GM12878 (cell line): ENCODE measurements at regions of chr10 and their contacts with region 1.

Region 1: GRCh38 chr10:68668231-68668630 is 52.8 kb upstream of the CCAR1 start:
- DNase-seq: no peak
- ATAC-seq: no peak
- H3K4me3 ChIP-seq: no peak overlapping the region
- H3K27ac ChIP-seq: no peak overlapping the region
- H3K4me1 ChIP-seq: no peaks in the 10 kb centered on the region
- H3K27me3 ChIP-seq: no peaks in the 10 kb centered on the region
- CTCF ChIP-seq: no peak
- EP300 ChIP-seq: no peak
- POLR2A ChIP-seq: no peak
- RAD21 ChIP-seq: no peak

Region 2: GRCh38 chr10:68618234-68618633 is 50.0 kb before region 1 on chr10:
- CTCF ChIA-PET with region 1: no interaction called
- POLR2A ChIA-PET with region 1: no interaction called
- RAD21 ChIA-PET with region 1: no interaction called
- SMC1A ChIA-PET with region 1: no interaction called
- in situ Hi-C with region 1: no loop called
- intact Hi-C with region 1: no loop called
- DNase-seq: no peak
- ATAC-seq: no peak
- H3K4me3 ChIP-seq: no peak overlapping the region
- H3K27ac ChIP-seq: no peak overlapping the region
- H3K4me1 ChIP-seq: no peaks in the 10 kb centered on the region; the same call in 1 of the 2 replicates
- H3K27me3 ChIP-seq: no peaks in the 10 kb centered on the region
- CTCF ChIP-seq: no peak
- EP300 ChIP-seq: no peak
- POLR2A ChIP-seq: no peak
- RAD21 ChIP-seq: no peak

Region 3: GRCh38 chr10:68697106-68697505 is 28.9 kb after region 1 on chr10:
- CTCF ChIA-PET with region 1: no interaction called
- POLR2A ChIA-PET with region 1: no interaction called
- RAD21 ChIA-PET with region 1: no interaction called
- SMC1A ChIA-PET with region 1: interaction called, 10 read pairs
- in situ Hi-C with region 1: no loop called
- intact Hi-C with region 1: no loop called
- DNase-seq: no peak
- ATAC-seq: no peak
- H3K4me3 ChIP-seq: no peak overlapping the region
- H3K27ac ChIP-seq: no peak overlapping the region
- H3K4me1 ChIP-seq: no peaks in the 10 kb centered on the region
- H3K27me3 ChIP-seq: no peaks in the 10 kb centered on the region
- CTCF ChIP-seq: no peak
- EP300 ChIP-seq: no peak
- POLR2A ChIP-seq: no peak
- RAD21 ChIP-seq: no peak